H1 (cell line): ENCODE measurements at regions of chr7 and their contacts with region 1.

Region 1: DNA sequence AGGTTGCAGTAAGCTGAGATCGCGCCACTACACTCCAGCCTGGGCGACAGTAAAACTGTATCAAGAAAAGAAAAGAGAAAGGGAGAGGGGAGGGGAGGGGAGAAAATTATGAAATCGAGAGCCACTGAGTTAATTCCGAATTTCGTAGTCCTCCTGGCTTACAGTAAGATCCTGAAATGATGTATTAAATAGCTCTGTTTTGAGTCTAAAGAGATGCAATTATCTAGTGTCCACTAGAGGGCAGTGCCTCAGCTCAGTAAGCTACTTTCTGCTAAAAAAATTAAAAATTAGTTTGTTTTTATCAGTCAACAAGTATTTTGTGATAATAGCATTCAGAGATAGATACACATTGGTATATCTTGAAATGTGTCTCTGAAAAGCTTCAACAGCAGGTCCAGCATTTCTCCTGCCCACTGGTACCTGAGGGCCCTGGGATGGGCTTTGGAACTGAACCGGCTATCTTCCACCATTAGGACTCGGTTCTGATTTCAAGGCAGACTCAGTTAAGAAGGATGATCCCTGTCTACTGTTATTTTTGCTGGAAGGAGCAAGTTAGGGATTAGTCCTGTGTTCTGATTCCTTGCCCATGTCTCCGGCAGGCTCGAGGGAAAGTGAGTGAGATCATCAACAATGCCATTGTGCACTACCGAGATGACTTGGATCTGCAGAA is 19.5 kb downstream of the TSPAN33 start:
- DNase-seq: no peak
- H3K4me3 ChIP-seq: no peak overlapping the region
- H3K27ac ChIP-seq: no peak overlapping the region
- H3K4me1 ChIP-seq: peaks cover 2 to 13% (median 12%) of the 10 kb centered on the region in 4 experiments
- H3K27me3 ChIP-seq: no peaks in the 10 kb centered on the region; a peak in 1 of 7 replicates
- CTCF ChIP-seq: peak in 2 of 3 experiments; percentile 45 to 70; a peak in 2 of 4 replicates
- EP300 ChIP-seq: no peak
- POLR2A ChIP-seq: no peak
- RAD21 ChIP-seq: peak; percentile 48 to 52

Region 2: DNA sequence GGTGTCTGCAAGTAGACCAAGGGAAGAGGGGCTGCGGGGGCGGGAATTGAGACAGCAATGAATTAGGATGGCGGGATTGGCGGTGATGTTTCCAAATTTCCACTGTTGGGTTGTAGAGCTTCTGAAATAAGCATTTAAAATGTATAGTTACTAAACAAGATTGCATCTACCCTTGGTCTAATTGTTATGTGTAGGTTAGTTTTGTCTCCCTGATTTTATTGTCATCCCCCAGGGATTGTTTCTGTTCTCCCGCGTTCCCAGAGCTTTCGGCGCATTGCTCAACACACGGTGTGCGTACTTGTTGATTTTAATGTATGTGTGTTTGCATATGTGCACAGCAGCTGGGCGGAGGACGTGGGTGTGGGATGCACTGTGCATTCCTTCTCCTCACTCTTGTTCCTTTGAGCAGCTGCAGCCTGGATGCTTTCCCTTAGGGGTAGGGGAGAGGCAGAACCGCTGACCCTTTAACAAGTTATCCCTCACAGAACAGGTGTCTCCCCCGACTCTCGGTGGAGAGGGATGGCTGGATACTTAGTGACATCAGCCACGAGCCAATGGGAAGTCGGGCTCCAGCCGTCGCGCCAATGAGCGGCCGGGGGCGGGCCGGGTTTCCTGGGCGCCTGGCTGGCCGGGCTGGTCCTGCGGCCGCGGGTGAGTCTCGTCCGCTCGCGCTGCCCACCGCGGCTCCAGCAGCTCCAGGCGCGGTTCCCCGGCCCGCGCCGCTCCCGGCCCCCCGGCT is 19.7 kb before region 1 on chr7 and contains the start of gene TSPAN33:
- CTCF ChIA-PET with region 1: interaction called, 27 read pairs
- POLR2A ChIA-PET with region 1: interaction called, 11 read pairs
- DNase-seq: peak in 1 of 2 experiments; percentile 88
- H3K4me3 ChIP-seq: peak within 1 kb of the TSS; percentile 43 to 99 (median 55)
- H3K27ac ChIP-seq: no peak within 1 kb of the TSS
- H3K4me1 ChIP-seq: peaks cover 0 to 4% (median 2%) of the 10 kb centered on the region in 4 experiments; a peak in 4 of 7 replicates
- H3K27me3 ChIP-seq: peaks cover 0 to 10% (median 3%) of the 10 kb centered on the region in 4 experiments; a peak in 4 of 7 replicates
- CTCF ChIP-seq: no peak
- EP300 ChIP-seq: no peak
- POLR2A ChIP-seq: no peak
- RAD21 ChIP-seq: no peak
- total RNA-seq, gene TSPAN33: 47.1 TPM in 2 replicates

Region 3: GRCh38 chr7:129188372-129188891 is 24.4 kb after region 1 on chr7 and contains the start of gene SMO:
- CTCF ChIA-PET with region 1: interaction called, 26 read pairs
- POLR2A ChIA-PET with region 1: interaction called, 116 read pairs
- DNase-seq: peak; percentile 54 to 91
- H3K4me3 ChIP-seq: peak within 1 kb of the TSS; percentile 80 to 99 (median 90)
- H3K27ac ChIP-seq: peak within 1 kb of the TSS; percentile 48; the same call in 1 of the 2 replicates
- H3K4me1 ChIP-seq: peaks cover 4 to 12% (median 9%) of the 10 kb centered on the region in 4 experiments; a peak in 6 of 7 replicates
- H3K27me3 ChIP-seq: peaks cover 0 to 12% (median 6%) of the 10 kb centered on the region in 4 experiments; a peak in 4 of 7 replicates
- CTCF ChIP-seq: no peak
- EP300 ChIP-seq: peak in 1 of 2 experiments; percentile 76; a peak in 1 of 3 replicates
- POLR2A ChIP-seq: peak; percentile 90 to 93
- RAD21 ChIP-seq: no peak; a peak in 1 of 4 replicates
- total RNA-seq, gene SMO: 61.2 and 64.5 TPM in 2 replicates

Region 4: GRCh38 chr7:129202058-129202777 is 38.2 kb after region 1 on chr7:
- CTCF ChIA-PET with region 1: interaction called, 258 read pairs
- POLR2A ChIA-PET with region 1: interaction called, 4 read pairs
- DNase-seq: no peak
- H3K4me3 ChIP-seq: no peak overlapping the region
- H3K27ac ChIP-seq: 0 out of 2 replicates have a peak overlapping the region, but pooled peaks have one; percentile 15
- H3K4me1 ChIP-seq: no peaks in the 10 kb centered on the region
- H3K27me3 ChIP-seq: no peaks in the 10 kb centered on the region
- CTCF ChIP-seq: no peak
- EP300 ChIP-seq: no peak
- POLR2A ChIP-seq: no peak
- RAD21 ChIP-seq: no peak